AG04449 (cell line): ENCODE measurements at regions of chr12 and their contacts with region 1.

Region 1: GRCh38 chr12:57063991-57064685 is 14.2 kb upstream of the MYO1A start:
- DNase-seq: no peak
- H3K4me3 ChIP-seq: no peak overlapping the region
- CTCF ChIP-seq: no peak

Region 2: DNA sequence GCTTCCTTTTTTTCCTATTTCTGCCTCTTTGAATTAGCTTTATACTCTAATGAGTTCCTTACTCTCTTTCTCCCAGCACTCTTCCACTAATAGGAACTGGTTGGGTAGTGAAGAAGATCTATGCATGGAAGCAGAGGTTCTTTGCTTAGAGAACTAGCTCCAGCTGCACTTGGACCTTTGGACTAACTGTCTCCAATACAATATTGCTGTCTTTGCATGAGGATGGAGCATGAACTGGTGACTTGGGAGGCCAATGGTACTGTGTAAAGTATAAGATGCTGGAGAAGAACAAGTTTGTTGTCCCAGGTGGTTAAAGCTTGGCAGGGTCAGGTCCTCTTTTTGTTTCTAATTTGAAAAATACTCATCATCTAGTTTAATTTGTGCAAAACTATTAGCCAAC is 573.8 kb before region 1 on chr12:
- CTCF ChIA-PET with region 1: no interaction called
- POLR2A ChIA-PET with region 1: no interaction called
- DNase-seq: no peak
- H3K4me3 ChIP-seq: no peak overlapping the region
- CTCF ChIP-seq: no peak

Region 3: GRCh38 chr12:56751712-56752598 is 312.2 kb before region 1 on chr12 and contains the start of gene PRIM1:
- CTCF ChIA-PET with region 1: interaction called, 58 read pairs
- POLR2A ChIA-PET with region 1: no interaction called
- DNase-seq: no peak
- H3K4me3 ChIP-seq: peak within 1 kb of the TSS; percentile 96
- CTCF ChIP-seq: no peak

Region 4: DNA sequence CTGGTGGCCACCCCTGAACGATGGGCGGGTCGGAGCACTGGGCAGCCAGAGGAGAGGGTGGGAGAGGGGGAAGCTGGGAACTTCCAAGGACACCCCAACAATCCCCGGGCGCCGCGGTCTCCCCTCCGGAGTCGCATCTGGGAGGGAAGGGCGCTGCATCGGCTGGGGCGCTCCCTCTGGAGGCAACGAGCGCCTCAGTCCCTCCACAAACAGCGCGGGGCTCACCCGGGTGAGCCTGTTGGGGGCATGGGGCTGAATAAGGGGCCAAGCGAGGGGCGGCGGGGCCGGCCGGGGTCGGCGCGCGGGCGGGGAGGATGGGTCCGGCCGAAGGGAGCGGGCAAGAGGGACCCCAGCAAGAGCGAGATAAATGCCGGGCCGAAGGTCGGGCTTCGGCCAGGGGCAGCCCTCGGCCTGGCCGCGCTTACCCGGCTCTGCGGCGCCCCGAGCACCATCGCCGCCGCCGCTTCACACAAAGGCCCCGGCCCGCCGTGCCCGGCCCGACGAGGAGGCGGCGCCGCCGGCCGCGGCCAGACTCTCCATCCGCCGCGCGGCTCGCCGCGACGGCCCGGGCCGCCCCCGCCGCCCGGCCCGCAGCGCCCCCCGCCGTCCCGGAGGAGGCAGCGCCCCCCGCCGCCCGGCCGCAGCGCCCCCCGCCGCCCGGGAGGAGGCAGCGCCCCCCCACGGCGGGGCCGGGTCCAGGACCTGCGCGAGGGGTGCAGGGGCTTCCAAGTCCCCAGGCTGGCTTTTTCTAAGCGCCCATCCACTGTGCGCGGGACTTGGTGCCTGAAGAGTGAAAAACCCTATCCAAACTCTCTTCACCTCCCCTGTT is 57.9 kb before region 1 on chr12 and contains the start of gene ZBTB39:
- CTCF ChIA-PET with region 1: interaction called, 500 read pairs
- POLR2A ChIA-PET with region 1: no interaction called
- DNase-seq: no peak
- H3K4me3 ChIP-seq: peak within 1 kb of the TSS; percentile 78
- CTCF ChIP-seq: peak; percentile 64

Region 5: GRCh38 chr12:57019983-57020719 is 44.0 kb before region 1 on chr12:
- CTCF ChIA-PET with region 1: interaction called, 500 read pairs
- POLR2A ChIA-PET with region 1: no interaction called
- DNase-seq: no peak
- H3K4me3 ChIP-seq: no peak overlapping the region
- CTCF ChIP-seq: no peak

Region 6: GRCh38 chr12:57046947-57047890 is 16.9 kb before region 1 on chr12:
- CTCF ChIA-PET with region 1: interaction called, 164 read pairs
- POLR2A ChIA-PET with region 1: no interaction called
- DNase-seq: no peak
- H3K4me3 ChIP-seq: no peak overlapping the region
- CTCF ChIP-seq: no peak